ENCODE measurements at regions of chr13 and their contacts with region 1.

Region 1: DNA sequence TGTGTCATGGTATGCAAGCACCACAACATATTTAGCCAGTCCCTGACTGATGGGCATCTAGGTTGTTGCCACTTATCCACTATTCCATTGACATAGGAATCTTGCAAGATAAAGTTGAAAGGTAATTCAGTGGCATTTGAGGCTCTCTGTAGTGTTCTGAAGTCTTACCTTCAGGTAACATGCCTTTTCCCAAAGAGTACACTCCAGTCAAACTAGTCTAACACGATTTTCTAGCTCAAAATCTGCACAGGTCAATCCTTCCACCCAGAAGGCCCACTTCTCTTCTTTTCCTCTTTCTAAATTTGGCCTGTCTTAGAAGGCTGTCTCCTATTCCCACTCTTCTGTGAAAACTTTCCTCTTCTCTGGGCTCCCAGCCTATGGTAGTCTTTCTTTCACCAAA is 32.4 kb upstream of the ATP12A start:
- DNase-seq: no peak
- H3K4me3 ChIP-seq: no peak overlapping the region
- H3K27ac ChIP-seq: no peak overlapping the region
- H3K27me3 ChIP-seq: peaks cover 0 to 10% (median 0%) of the 10 kb centered on the region in 45 donors
- CTCF ChIP-seq: no peak

Region 2: DNA sequence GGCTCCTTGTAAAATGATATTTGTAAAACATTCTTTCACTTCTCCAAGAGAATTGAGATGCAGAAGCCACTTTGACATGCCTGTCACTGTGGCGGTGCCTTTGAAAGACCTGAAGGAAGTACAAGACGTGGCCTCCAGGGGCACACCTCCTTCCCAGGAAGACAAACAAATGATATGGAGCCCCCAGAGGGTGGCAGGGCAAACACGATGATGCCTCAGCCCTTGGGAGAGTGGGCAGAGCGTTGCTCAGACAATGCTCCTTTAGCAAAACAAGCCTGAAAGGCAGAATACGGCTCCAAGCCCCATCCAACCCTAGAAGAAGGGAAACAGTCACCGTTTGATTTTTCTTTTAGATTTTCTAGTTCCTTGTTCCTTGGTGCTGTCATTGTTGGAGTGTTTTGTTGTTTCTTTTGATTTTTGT is 23.1 kb after region 1 on chr13:
- intact Hi-C with region 1: loop called in 1 of 2 experiments (anchors 1 kb)
- DNase-seq: no peak
- H3K4me3 ChIP-seq: peak overlapping the region in 16 of 59 donors; percentile 2 to 41 (median 22)
- H3K27ac ChIP-seq: no peak overlapping the region
- H3K27me3 ChIP-seq: peaks cover 0 to 18% (median 0%) of the 10 kb centered on the region in 45 donors
- CTCF ChIP-seq: no peak

Region 3: DNA sequence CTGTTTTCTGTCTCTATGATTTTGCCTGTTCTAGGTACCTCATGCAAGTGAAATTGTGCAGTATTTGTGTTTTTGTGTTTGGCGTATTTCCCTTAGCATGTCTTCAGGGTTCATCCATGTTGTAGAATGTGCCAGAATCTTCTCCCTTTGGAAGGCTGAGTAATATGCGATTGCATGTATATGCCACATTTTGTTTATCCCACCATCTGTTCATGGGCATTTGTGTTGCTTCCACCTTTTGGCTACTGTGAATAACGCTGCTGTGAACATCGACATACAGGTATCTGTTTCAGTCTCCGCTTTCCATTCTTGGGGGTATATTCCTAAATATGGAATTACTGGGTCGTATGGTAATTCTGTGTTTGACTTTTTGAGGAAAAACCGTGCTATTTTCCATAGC is 914.0 kb after region 1 on chr13:
- intact Hi-C with region 1: no loop called
- DNase-seq: no peak
- H3K4me3 ChIP-seq: no peak overlapping the region
- H3K27ac ChIP-seq: peak overlapping the region in 1 of 59 donors; percentile 26
- H3K27me3 ChIP-seq: no peaks in the 10 kb centered on the region
- CTCF ChIP-seq: no peak

Region 4: DNA sequence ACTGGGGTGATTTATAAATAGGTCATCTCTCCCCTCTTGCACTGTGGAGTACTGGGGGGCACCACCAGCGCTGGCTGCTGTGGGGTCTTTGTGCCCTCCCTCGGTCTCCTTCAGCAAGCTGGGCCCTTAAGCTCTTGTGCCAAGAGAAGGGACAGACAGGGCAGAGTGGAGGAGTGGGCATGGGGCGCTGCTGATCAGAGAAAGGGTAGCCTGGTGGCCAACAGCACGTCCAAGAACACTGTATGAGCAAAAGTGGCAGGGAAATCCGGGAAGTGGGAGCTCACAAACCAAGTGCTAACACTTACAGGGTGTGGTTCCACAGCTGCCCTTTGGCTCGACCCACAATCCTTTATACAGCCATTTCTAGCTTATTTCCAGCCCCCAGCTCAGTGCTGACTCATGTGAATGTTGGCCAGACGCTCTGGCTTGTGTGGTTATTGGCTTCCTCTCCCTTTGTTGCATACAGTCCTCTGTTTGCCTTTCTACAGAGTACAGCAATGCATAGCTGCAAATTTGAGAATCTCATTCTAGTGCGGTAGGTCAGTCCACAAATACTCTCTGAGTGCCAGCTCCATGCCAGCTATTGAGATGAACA is 1105.2 kb after region 1 on chr13:
- intact Hi-C with region 1: no loop called
- DNase-seq: no peak
- H3K4me3 ChIP-seq: no peak overlapping the region
- H3K27ac ChIP-seq: no peak overlapping the region
- H3K27me3 ChIP-seq: no peaks in the 10 kb centered on the region
- CTCF ChIP-seq: no peak